Thyroid gland (tissue), 4 donors: ENCODE measurements at regions of chr20 and their contacts with region 1.

Region 1: GRCh38 chr20:21125849-21126580 is at the start of gene KIZ:
- DNase-seq: peak; percentile 95 to 97
- H3K4me3 ChIP-seq: peak within 1 kb of the TSS; percentile 69 to 99 (median 88)
- H3K27ac ChIP-seq: peak within 1 kb of the TSS; percentile 40 to 84 (median 64)
- H3K4me1 ChIP-seq: peaks cover 8 to 12% of the 10 kb centered on the region in 2 donors
- H3K27me3 ChIP-seq: no peaks in the 10 kb centered on the region
- CTCF ChIP-seq: peak in 3 of 6 experiments; percentile 38 to 56 (median 50)
- POLR2A ChIP-seq: peak in 1 of 2 donors; percentile 92
- total RNA-seq, gene KIZ: 46.7 to 73.0 (median 48.6) TPM

Region 2: GRCh38 chr20:21395666-21396598 is 269.9 kb after region 1 on chr20:
- intact Hi-C with region 1: loop called (anchors 10 kb)
- DNase-seq: peak; percentile 15 to 49
- H3K4me3 ChIP-seq: no peak overlapping the region
- H3K27ac ChIP-seq: no peak overlapping the region
- H3K4me1 ChIP-seq: peaks cover 0 to 19% of the 10 kb centered on the region in 2 donors
- H3K27me3 ChIP-seq: peaks cover 70% of the 10 kb centered on the region
- CTCF ChIP-seq: no peak
- POLR2A ChIP-seq: no peak